PC-9 (cell line): ENCODE measurements at regions of chr5 and their contacts with region 1.

Region 1: DNA sequence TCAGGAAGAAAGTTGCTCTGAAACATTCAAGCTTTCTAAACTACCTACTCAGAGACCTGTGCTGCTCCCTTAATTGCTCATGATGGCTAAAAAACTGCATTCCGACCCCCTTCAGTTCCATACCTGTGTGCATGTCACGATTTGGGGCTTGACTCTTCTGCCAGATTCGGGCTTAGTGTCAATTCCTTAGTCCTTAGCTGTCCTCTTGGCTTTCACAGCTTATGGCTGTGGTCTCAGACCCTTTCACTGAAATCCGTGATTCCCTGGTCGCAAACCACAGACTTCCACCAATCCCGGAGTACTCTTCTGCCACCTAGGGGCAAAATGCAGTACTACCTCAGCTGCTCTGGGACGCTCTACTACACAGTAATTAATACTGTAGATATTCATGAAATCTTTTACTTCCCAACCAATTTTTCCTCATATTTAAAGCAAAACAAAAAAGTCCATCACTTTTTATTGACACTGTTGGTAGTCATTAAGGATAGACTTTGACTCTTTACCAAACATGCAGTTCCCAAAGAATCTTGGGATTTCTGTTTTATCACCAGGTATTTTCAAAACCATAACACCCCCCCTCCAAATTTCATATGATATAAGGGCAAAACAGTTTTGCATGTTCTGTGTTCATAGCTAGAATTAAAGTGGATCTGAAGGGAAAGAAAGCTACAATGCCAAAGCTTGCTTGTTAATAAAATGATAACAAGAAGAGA is 617.4 kb downstream of the SLCO4C1 start:
- DNase-seq: peak; percentile 39 to 48
- H3K4me3 ChIP-seq: no peak overlapping the region
- H3K27ac ChIP-seq: no peak overlapping the region
- H3K4me1 ChIP-seq: no peaks in the 10 kb centered on the region
- H3K27me3 ChIP-seq: no peaks in the 10 kb centered on the region
- CTCF ChIP-seq: peak; percentile 86

Region 2: DNA sequence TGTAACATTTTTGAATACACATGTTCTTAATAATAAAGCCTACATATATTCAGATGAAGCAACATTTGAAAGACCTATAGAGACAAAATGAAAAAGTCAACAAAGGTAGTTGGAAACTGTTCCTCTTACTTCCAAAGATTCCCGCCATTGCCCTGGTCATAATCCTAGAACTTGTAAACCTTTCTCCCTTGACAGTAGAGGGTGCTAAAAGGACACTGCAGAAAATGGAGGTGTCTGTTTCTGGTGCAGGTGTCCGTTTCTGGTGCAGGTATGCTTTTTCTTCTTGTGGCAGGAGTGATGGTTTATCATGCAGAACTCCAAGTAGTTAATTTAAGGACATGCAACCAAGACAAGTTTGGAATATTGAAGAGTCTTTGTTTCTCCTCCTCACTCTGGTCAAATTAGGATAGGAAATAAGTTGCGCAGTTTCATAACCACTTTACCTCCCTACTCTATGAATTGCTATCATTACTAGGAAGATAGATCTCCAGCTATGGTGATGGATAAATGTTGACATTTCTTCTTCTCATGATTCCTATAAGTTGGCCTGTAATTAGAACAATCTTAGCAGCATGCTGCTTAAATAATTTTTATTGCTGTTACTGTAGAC is 1199.5 kb before region 1 on chr5:
- CTCF ChIA-PET with region 1: no interaction called
- POLR2A ChIA-PET with region 1: no interaction called
- intact Hi-C with region 1: loop called (anchors 5 kb)
- DNase-seq: no peak
- H3K4me3 ChIP-seq: no peak overlapping the region
- H3K27ac ChIP-seq: no peak overlapping the region
- H3K4me1 ChIP-seq: no peaks in the 10 kb centered on the region
- H3K27me3 ChIP-seq: no peaks in the 10 kb centered on the region
- CTCF ChIP-seq: peak; percentile 64